CD4-positive, alpha-beta memory T cell (primary cell): ENCODE measurements at regions of chr5 and their contacts with region 1.

Region 1: DNA sequence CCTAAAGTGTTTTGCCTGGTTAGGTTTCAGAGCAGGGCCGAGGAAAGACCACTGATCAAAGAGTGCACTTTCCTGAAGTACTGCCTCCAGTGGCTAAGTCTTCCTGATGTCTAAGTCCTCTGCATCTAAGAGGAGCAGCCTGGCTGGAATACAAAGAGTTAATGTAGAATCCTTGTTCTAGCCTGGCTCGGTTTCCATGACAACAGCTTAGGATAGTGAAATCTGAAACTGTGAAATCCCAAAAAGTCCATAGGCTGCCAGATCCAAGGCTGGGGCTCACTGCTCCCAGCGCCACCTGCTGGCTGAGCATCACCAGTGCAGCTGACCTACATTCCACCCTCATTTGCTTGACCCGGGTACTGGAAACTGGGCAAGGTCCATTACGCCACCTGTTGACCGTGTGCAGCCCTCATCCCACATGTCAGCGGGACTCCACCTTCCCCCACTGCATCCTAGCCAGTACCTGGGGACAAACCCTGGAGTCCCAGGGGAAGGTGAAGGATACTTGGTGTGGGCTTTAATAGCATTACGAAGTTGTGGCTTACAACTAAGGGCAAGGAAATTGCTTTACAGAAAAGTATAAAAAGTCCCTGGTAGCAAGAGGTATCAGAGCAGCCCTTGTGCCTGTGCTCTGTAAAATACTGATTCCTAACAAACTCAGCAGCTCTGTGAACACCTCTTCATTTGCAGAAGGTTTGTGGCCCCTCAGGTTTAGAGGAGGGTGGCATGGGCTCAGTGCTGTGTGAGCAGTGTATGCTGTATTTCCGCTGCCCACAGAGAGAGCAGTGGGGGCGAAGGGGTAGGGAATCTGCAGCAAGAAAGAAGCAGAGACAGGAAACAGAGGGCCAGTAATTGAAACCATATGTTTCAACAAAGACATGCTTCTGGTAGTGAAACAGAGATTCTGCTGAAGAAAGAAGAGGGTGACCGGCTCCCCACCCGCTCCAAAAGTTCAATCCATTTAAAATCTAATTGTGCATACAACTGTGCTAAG is 36.0 kb downstream of the PCDHGC5 start:
- DNase-seq: peak; percentile 46 to 62 (median 51)
- H3K4me3 ChIP-seq: no peak overlapping the region
- H3K4me3 Mint-ChIP-seq: no peak overlapping the region
- H3K27ac ChIP-seq: no peak overlapping the region
- H3K27ac Mint-ChIP-seq: peak overlapping the region in 5 of 7 donors; percentile 26 to 72 (median 57)
- H3K4me1 ChIP-seq: peaks cover 15% of the 10 kb centered on the region
- H3K4me1 Mint-ChIP-seq: peaks cover 11 to 28% (median 21%) of the 10 kb centered on the region in 4 donors
- H3K27me3 ChIP-seq: no peaks in the 10 kb centered on the region
- H3K27me3 Mint-ChIP-seq: no peaks in the 10 kb centered on the region

Region 2: DNA sequence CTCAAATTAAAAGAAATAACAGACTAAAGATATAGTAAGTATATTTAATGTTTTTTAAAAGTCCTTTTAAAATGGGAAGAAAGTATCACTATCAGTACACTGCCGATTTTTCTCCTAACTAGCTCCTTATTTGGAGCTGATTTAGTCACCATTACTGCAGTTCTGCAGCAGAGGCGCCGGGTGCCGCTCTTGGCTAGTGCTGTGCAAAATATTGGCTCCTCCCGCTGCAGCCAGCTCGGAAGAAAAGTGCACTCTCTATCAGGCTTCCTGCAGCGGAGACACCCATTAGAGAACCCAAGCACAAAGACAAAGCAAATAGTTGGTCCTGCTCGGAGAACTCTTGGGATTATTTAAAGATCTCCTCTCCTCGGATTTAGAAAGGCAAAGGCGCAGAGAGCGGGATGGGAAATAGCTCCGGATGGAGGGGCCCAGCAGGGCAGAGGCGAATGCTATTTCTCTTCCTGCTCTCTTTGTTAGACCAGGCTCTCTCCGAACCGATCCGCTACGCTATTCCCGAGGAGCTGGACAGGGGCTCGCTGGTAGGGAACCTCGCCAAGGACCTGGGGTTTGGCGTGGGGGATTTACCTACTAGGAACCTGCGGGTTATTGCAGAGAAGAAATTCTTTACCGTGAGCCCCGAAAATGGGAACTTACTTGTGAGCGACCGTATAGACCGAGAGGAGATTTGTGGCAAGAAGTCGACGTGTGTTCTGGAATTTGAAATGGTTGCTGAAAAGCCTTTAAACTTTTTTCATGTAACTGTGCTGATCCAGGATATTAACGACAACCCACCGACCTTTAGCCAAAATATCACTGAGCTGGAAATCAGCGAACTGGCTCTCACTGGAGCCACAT is 154.7 kb before region 1 on chr5 and contains the start of gene PCDHGB3:
- CTCF ChIA-PET with region 1: interaction called, 17 read pairs
- POLR2A ChIA-PET with region 1: no interaction called
- intact Hi-C with region 1: no loop called
- DNase-seq: peak in 4 of 5 donors; percentile 30 to 49 (median 37)
- H3K4me3 ChIP-seq: peak within 1 kb of the TSS in 1 of 2 donors; percentile 15
- H3K4me3 Mint-ChIP-seq: peak within 1 kb of the TSS; percentile 69 to 89 (median 83)
- H3K27ac ChIP-seq: no peak within 1 kb of the TSS
- H3K27ac Mint-ChIP-seq: peak within 1 kb of the TSS in 1 of 7 donors; percentile 68
- H3K4me1 ChIP-seq: peaks cover 6% of the 10 kb centered on the region
- H3K4me1 Mint-ChIP-seq: peaks cover 4 to 11% (median 8%) of the 10 kb centered on the region in 4 donors
- H3K27me3 ChIP-seq: peaks cover 20% of the 10 kb centered on the region
- H3K27me3 Mint-ChIP-seq: peaks cover 43 to 46% of the 10 kb centered on the region in 2 donors
- total RNA-seq, gene PCDHGB3: 0.50 to 0.76 TPM

Region 3: GRCh38 chr5:141465351-141465750 is 59.5 kb before region 1 on chr5:
- CTCF ChIA-PET with region 1: no interaction called
- POLR2A ChIA-PET with region 1: no interaction called
- intact Hi-C with region 1: no loop called
- DNase-seq: no peak
- H3K4me3 ChIP-seq: no peak overlapping the region
- H3K4me3 Mint-ChIP-seq: no peak overlapping the region
- H3K27ac ChIP-seq: no peak overlapping the region
- H3K27ac Mint-ChIP-seq: no peak overlapping the region
- H3K4me1 ChIP-seq: no peaks in the 10 kb centered on the region
- H3K4me1 Mint-ChIP-seq: no peaks in the 10 kb centered on the region
- H3K27me3 ChIP-seq: no peaks in the 10 kb centered on the region
- H3K27me3 Mint-ChIP-seq: peaks cover 6 to 16% of the 10 kb centered on the region in 2 donors

Region 4: DNA sequence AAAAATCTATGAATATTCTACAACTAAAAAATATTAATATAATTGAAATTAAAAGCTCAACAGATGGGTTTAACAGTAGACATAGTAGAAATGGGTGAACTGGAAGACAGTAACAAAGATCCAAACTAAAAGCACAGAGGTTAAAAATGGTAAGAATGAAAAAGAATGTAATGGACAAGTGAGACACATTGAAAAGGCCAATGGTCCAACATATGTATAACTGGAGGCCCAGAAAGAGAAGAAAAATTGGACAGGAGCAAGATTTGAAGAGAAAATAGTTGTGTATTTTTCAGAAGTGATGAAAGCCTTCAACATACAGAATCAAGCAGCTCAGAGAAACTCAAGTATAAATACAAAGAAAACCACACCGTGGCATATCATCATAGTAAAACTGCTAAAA is 22.6 kb after region 1 on chr5:
- CTCF ChIA-PET with region 1: interaction called, 3 read pairs
- POLR2A ChIA-PET with region 1: no interaction called
- intact Hi-C with region 1: loop called (anchors 2 kb)
- DNase-seq: no peak
- H3K4me3 ChIP-seq: no peak overlapping the region
- H3K4me3 Mint-ChIP-seq: peak overlapping the region in 1 of 8 donors; percentile 64
- H3K27ac ChIP-seq: no peak overlapping the region
- H3K27ac Mint-ChIP-seq: no peak overlapping the region
- H3K4me1 ChIP-seq: peaks cover 17% of the 10 kb centered on the region
- H3K4me1 Mint-ChIP-seq: peaks cover 27 to 51% (median 38%) of the 10 kb centered on the region in 4 donors
- H3K27me3 ChIP-seq: no peaks in the 10 kb centered on the region
- H3K27me3 Mint-ChIP-seq: no peaks in the 10 kb centered on the region